Activated naive CD4-positive, alpha-beta T cell treated with anti-CD3 and anti-CD28 coated beads, Interleukin-2, amount 10 ng/mL, durations not matched to agents 7 days and 5 days (primary cell): ENCODE measurements at regions of chr16 and their contacts with region 1.

Region 1: GRCh38 chr16:4586291-4586690 is 28.4 kb downstream of the UBALD1 start:
- DNase-seq: no peak
- H3K4me3 Mint-ChIP-seq: no peak overlapping the region
- H3K27ac Mint-ChIP-seq: no peak overlapping the region
- H3K4me1 Mint-ChIP-seq: peaks cover 4% of the 10 kb centered on the region
- H3K27me3 Mint-ChIP-seq: peaks cover 41% of the 10 kb centered on the region

Region 2: DNA sequence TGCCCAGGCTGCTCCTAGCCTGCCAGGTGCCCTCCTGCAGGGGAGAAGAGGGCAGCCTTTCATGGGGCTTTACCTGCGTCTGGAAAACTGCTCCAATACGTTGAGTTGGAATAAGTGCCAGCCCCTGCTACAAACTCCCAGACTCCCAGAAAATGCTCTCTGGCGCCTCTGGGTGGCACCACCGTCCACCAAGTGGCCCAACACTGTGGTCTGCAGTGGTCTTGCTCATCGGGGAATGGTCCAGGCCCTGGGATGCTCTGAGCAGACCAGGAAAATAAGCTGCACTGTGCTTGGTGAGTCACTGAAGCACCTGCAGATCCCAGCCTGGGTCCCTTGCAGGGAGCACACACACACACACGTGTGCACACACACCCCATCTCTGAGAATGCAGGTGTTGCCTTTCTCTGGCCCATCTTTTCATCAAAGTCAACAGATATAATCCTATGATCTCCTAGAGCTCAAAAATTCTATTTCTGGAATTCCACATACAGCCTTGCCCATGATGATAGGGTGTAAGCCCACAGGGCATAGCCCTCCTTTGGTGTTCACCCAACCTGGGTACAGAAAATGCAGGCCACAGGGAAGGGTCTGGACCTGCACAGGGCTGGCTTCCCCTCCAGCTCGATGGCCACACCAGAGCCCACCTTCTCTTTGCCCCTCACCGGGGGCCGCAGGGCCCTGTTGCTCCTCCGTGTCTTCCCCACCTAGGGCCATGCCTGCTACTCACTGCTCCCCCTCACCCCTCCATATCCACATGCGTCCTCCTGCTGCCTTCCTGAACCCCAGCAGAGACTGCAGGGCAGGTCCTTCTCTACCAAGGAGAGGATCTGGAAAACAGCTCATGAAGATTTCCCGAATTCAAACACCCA is 68.2 kb before region 1 on chr16:
- CTCF ChIA-PET with region 1: interaction called, 10 read pairs
- DNase-seq: no peak
- H3K4me3 Mint-ChIP-seq: no peak overlapping the region
- H3K27ac Mint-ChIP-seq: no peak overlapping the region
- H3K4me1 Mint-ChIP-seq: peaks cover 40% of the 10 kb centered on the region
- H3K27me3 Mint-ChIP-seq: no peaks in the 10 kb centered on the region

Region 3: DNA sequence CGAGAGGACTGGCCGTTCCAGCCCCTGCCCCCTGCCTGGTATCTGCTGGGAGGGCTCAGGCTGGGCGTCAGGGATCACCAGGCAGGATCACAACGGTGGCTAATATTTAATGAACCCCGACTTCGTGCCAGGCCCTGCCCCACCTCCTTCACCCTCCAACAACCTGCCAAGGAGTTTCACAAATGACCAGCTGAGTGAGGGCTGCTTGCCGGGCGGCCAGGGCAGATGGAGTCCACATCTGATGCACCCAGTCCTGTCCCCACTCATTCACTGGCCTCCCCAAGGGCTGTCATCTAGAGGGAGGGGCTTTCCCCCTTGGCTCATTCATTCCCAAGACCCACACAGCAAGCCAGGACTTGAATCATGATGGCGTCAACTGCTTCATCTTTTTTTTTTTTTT is 10.9 kb after region 1 on chr16:
- CTCF ChIA-PET with region 1: interaction called, 14 read pairs
- DNase-seq: no peak
- H3K4me3 Mint-ChIP-seq: no peak overlapping the region
- H3K27ac Mint-ChIP-seq: no peak overlapping the region
- H3K4me1 Mint-ChIP-seq: no peaks in the 10 kb centered on the region
- H3K27me3 Mint-ChIP-seq: peaks cover 44% of the 10 kb centered on the region